CD4-positive, alpha-beta memory T cell (primary cell): ENCODE measurements at regions of chr19 and their contacts with region 1.

Region 1: GRCh38 chr19:13150187-13150930 is at the starts of genes IER2 and STX10:
- DNase-seq: peak; percentile 90 to 96 (median 91)
- H3K4me3 ChIP-seq: peak within 1 kb of the TSS; percentile 81 to 98
- H3K4me3 Mint-ChIP-seq: peak within 1 kb of the TSS; percentile 95 to 99 (median 99)
- H3K27ac ChIP-seq: peak within 1 kb of the TSS; percentile 98
- H3K27ac Mint-ChIP-seq: peak within 1 kb of the TSS; percentile 95 to 99 (median 98)
- H3K4me1 ChIP-seq: peaks cover 17% of the 10 kb centered on the region
- H3K4me1 Mint-ChIP-seq: peaks cover 10 to 54% (median 22%) of the 10 kb centered on the region in 4 donors
- H3K27me3 ChIP-seq: no peaks in the 10 kb centered on the region
- H3K27me3 Mint-ChIP-seq: peaks cover 0 to 3% of the 10 kb centered on the region in 2 donors
- total RNA-seq, gene IER2: 148 to 153 TPM
- total RNA-seq, gene STX10: 63.7 to 64.0 TPM

Region 2: GRCh38 chr19:12789904-12790619 is 360.3 kb before region 1 on chr19:
- CTCF ChIA-PET with region 1: no interaction called
- POLR2A ChIA-PET with region 1: interaction called, 8 read pairs
- intact Hi-C with region 1: loop called (anchors 5 kb)
- DNase-seq: peak; percentile 90 to 93 (median 92)
- H3K4me3 ChIP-seq: peak overlapping the region; percentile 85 to 100
- H3K4me3 Mint-ChIP-seq: peak overlapping the region; percentile 92 to 98 (median 95)
- H3K27ac ChIP-seq: peak overlapping the region; percentile 100
- H3K27ac Mint-ChIP-seq: peak overlapping the region in 6 of 7 donors; percentile 99 to 100 (median 100)
- H3K4me1 ChIP-seq: peaks cover 55% of the 10 kb centered on the region
- H3K4me1 Mint-ChIP-seq: peaks cover 20 to 47% (median 28%) of the 10 kb centered on the region in 4 donors
- H3K27me3 ChIP-seq: no peaks in the 10 kb centered on the region
- H3K27me3 Mint-ChIP-seq: no peaks in the 10 kb centered on the region

Region 3: DNA sequence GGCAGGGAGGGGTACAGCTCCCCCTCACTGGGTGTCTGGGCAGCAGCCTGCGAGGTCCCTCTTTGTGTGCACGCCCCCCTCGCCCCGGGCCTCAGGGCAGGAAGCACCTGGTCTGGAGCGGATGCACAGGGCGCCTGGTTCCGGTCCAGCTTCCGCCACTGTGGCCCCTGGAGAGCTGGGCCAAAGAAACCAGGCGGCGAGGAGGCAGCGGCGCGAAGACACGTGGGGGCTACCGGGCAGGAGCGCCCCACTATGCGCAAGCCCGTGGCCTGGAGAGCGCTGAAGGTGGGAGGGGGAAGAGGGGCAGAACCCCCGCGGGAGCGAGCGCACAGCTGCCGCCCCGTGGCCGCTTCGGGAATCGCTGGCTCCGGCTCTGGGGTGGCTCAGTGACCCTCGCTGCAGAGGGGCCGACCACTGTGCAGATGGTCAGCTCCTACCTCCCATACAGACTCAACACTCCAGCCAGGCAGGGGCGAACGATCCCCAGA is 46.0 kb before region 1 on chr19:
- CTCF ChIA-PET with region 1: interaction called, 6 read pairs
- POLR2A ChIA-PET with region 1: interaction called, 39 read pairs
- intact Hi-C with region 1: loop called (anchors 1 kb)
- DNase-seq: peak; percentile 50 to 74 (median 60)
- H3K4me3 ChIP-seq: peak overlapping the region; percentile 65 to 73
- H3K4me3 Mint-ChIP-seq: peak overlapping the region; percentile 87 to 97 (median 92)
- H3K27ac ChIP-seq: peak overlapping the region; percentile 48
- H3K27ac Mint-ChIP-seq: peak overlapping the region; percentile 83 to 94 (median 93)
- H3K4me1 ChIP-seq: peaks cover 63% of the 10 kb centered on the region
- H3K4me1 Mint-ChIP-seq: peaks cover 18 to 49% (median 32%) of the 10 kb centered on the region in 4 donors
- H3K27me3 ChIP-seq: no peaks in the 10 kb centered on the region
- H3K27me3 Mint-ChIP-seq: no peaks in the 10 kb centered on the region

Region 4: DNA sequence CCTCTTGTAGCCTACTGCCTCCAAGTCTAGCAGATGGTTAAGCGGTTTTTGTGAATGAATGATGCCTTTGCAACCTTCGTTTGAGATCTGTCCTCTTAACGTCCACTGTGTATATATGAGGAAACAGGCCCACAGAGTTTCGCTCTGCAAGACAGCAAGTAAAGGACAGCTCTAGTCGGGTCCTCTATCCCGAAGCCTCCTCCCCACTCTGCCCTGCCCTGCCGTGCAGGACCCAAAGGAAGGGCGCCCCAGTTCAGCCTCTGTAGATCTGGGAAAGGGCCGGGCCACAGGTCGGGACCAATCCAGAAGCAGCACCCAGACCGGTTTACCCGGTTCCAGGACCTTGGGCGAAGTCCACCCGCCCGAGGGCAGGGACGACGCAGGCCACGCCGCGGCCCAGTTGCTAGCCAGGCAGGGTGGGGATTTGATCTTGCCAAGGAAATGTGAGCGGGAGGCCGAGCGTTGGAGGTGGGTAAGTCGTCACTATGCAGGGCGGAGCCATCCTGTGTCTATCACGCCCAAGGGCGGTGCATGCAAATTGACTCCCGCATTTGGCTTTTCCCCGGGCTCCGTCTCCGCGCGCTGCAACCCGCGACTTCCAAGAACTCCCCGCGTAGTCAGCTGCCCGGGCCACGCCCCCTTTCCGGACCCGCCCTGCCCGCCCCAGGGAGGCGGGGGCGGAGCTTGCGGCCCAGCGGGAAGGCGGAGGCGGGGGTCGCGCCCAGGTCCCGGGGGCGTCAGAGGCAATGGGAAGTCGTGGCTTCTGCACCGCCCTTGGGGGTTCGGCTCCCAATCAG is 12.4 kb after region 1 on chr19:
- CTCF ChIA-PET with region 1: interaction called, 51 read pairs
- POLR2A ChIA-PET with region 1: interaction called, 415 read pairs
- intact Hi-C with region 1: loop called (anchors 2 kb)
- DNase-seq: peak; percentile 69 to 89 (median 72)
- H3K4me3 ChIP-seq: peak overlapping the region; percentile 58 to 91
- H3K4me3 Mint-ChIP-seq: peak overlapping the region; percentile 83 to 91 (median 88)
- H3K27ac ChIP-seq: peak overlapping the region; percentile 82
- H3K27ac Mint-ChIP-seq: peak overlapping the region; percentile 94 to 99 (median 97)
- H3K4me1 ChIP-seq: peaks cover 96% of the 10 kb centered on the region
- H3K4me1 Mint-ChIP-seq: peaks cover 42 to 85% (median 63%) of the 10 kb centered on the region in 4 donors
- H3K27me3 ChIP-seq: no peaks in the 10 kb centered on the region
- H3K27me3 Mint-ChIP-seq: no peaks in the 10 kb centered on the region

Region 5: DNA sequence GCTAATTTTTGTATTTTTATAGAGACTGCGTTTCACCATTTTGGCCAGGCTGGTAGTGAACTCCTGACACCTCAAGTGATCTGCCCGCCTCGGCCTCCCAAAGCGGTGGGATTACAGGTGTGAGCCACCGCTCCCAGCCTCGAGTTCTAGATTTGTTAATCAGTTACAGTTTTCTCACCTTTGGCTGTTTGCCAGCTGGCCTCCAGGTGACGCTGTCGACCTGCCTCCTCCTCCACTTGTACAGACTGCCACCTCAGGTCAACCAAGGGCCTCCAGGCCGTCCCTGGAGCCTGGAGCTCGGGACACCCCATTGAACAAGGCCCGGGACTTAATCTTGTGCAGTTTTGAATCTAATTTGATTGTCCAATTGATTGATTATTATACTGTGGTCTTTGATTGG is 45.3 kb after region 1 on chr19:
- CTCF ChIA-PET with region 1: interaction called, 52 read pairs
- POLR2A ChIA-PET with region 1: interaction called, 69 read pairs
- intact Hi-C with region 1: loop called (anchors 1 kb)
- DNase-seq: peak; percentile 60 to 66 (median 62)
- H3K4me3 ChIP-seq: no peak overlapping the region
- H3K4me3 Mint-ChIP-seq: peak overlapping the region in 6 of 8 donors; percentile 9 to 68 (median 56)
- H3K27ac ChIP-seq: no peak overlapping the region
- H3K27ac Mint-ChIP-seq: peak overlapping the region in 6 of 7 donors; percentile 52 to 91 (median 75)
- H3K4me1 ChIP-seq: peaks cover 39% of the 10 kb centered on the region
- H3K4me1 Mint-ChIP-seq: peaks cover 12 to 32% (median 23%) of the 10 kb centered on the region in 4 donors
- H3K27me3 ChIP-seq: no peaks in the 10 kb centered on the region
- H3K27me3 Mint-ChIP-seq: no peaks in the 10 kb centered on the region

Region 6: DNA sequence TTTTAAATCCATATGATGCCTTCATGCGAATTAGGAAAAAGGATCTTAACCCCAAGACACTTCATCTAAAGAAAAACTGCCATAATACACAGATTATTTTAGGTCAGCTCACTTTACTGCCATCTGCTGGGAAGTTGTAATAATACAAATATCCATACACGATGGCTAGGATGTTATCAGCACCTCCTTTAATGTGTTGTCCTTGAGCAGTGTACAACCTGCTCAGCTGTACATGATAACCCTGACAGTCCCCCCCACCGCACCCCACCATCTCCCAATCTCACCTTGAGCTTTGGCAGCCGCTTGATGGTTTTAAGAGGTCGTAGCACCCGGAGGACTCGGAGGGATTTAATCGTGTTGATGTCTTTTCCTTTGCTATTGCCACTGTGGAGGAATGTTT is 112.1 kb after region 1 on chr19:
- CTCF ChIA-PET with region 1: interaction called, 6 read pairs
- POLR2A ChIA-PET with region 1: interaction called, 12 read pairs
- intact Hi-C with region 1: loop called (anchors 1 kb)
- DNase-seq: peak in 4 of 5 donors; percentile 45 to 56 (median 51)
- H3K4me3 ChIP-seq: no peak overlapping the region
- H3K4me3 Mint-ChIP-seq: no peak overlapping the region
- H3K27ac ChIP-seq: no peak overlapping the region
- H3K27ac Mint-ChIP-seq: peak overlapping the region in 3 of 7 donors; percentile 35 to 59 (median 43)
- H3K4me1 ChIP-seq: no peaks in the 10 kb centered on the region
- H3K4me1 Mint-ChIP-seq: peaks cover 2 to 4% (median 3%) of the 10 kb centered on the region in 4 donors
- H3K27me3 ChIP-seq: no peaks in the 10 kb centered on the region
- H3K27me3 Mint-ChIP-seq: peaks cover 7 to 18% of the 10 kb centered on the region in 2 donors

Region 7: DNA sequence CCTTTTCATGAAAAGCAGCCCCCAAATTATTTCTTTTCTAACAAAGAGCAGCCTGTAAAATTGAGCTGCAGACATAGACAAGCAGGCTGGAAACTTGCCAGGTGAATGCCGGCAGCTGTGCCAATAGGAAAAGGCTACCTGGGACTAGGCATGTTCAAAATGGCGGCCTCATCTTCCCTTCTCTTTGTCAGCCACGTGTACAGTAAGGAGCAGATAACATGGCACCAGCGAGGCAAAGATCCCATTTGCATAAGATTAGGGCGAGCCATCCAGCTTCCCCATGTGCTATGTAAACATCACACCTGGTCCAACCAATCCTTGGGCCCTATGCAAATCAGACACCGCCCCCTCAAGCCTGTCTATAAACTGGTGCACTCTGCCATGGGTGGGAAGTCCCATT is 387.1 kb after region 1 on chr19:
- CTCF ChIA-PET with region 1: no interaction called
- POLR2A ChIA-PET with region 1: no interaction called
- intact Hi-C with region 1: no loop called
- DNase-seq: no peak
- H3K4me3 ChIP-seq: no peak overlapping the region
- H3K4me3 Mint-ChIP-seq: no peak overlapping the region
- H3K27ac ChIP-seq: no peak overlapping the region
- H3K27ac Mint-ChIP-seq: no peak overlapping the region
- H3K4me1 ChIP-seq: no peaks in the 10 kb centered on the region
- H3K4me1 Mint-ChIP-seq: no peaks in the 10 kb centered on the region
- H3K27me3 ChIP-seq: no peaks in the 10 kb centered on the region
- H3K27me3 Mint-ChIP-seq: peaks cover 19 to 31% of the 10 kb centered on the region in 2 donors

Region 8: GRCh38 chr19:14081325-14082093 is 931.1 kb after region 1 on chr19:
- CTCF ChIA-PET with region 1: no interaction called
- POLR2A ChIA-PET with region 1: interaction called, 3 read pairs
- intact Hi-C with region 1: loop called (anchors 5 kb)
- DNase-seq: peak; percentile 98 to 99 (median 99)
- H3K4me3 ChIP-seq: peak overlapping the region; percentile 61 to 74
- H3K4me3 Mint-ChIP-seq: peak overlapping the region; percentile 87 to 97 (median 92)
- H3K27ac ChIP-seq: peak overlapping the region; percentile 68
- H3K27ac Mint-ChIP-seq: peak overlapping the region; percentile 84 to 98 (median 95)
- H3K4me1 ChIP-seq: peaks cover 18% of the 10 kb centered on the region
- H3K4me1 Mint-ChIP-seq: peaks cover 5 to 28% (median 17%) of the 10 kb centered on the region in 4 donors
- H3K27me3 ChIP-seq: no peaks in the 10 kb centered on the region
- H3K27me3 Mint-ChIP-seq: no peaks in the 10 kb centered on the region